PC-3 (cell line): ENCODE measurements at regions of chr18 and their contacts with region 1.

Region 1: DNA sequence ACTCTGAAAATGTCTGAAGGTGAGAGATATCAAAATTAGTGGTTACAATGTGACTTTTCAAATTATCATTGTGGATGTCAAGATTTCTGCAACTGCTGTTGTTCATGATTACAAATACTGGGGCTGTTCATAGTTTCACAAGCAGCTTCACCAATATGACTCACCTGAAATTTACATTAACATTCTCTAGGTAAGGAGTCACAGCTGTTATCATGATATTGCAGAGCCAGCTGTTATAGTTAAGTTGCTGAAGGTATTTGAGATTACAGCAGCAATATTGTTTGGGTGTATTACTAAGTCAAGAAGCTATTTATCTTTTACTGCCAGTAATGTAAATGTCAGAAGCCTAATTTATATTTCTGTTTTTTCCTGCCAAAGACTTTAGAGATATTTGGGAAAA is 140.0 kb downstream of the MC4R start:
- DNase-seq: peak; percentile 89
- ATAC-seq: peak; percentile 97
- H3K4me3 ChIP-seq: no peak overlapping the region
- H3K27ac ChIP-seq: peak overlapping the region; percentile 22; the same call in 1 of the 2 replicates
- H3K4me1 ChIP-seq: peaks cover 24% of the 10 kb centered on the region
- H3K27me3 ChIP-seq: no peaks in the 10 kb centered on the region
- CTCF ChIP-seq: no peak

Region 2: DNA sequence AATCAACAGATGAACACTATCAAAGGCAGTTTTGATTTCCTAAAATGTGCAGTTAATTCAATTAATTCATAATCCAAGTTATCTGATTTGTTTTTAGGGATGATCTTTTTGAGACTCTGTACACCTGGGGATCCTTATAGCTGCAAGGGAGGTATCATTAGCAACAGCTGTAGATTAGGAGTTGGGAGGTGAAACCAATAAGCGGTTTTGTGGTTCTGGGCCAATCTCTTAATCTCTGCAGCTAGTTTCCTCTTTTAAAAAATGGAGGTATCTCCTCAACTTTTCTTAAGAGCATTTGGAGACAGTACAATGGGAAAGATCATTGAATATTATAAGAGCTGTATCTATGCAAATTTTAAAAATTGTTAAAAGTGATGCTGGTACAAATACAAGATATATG is 14.1 kb after region 1 on chr18:
- CTCF ChIA-PET with region 1: no interaction called
- POLR2A ChIA-PET with region 1: no interaction called
- intact Hi-C with region 1: no loop called
- DNase-seq: no peak
- ATAC-seq: no peak
- H3K4me3 ChIP-seq: no peak overlapping the region
- H3K27ac ChIP-seq: no peak overlapping the region
- H3K4me1 ChIP-seq: no peaks in the 10 kb centered on the region
- H3K27me3 ChIP-seq: no peaks in the 10 kb centered on the region
- CTCF ChIP-seq: no peak

Region 3: DNA sequence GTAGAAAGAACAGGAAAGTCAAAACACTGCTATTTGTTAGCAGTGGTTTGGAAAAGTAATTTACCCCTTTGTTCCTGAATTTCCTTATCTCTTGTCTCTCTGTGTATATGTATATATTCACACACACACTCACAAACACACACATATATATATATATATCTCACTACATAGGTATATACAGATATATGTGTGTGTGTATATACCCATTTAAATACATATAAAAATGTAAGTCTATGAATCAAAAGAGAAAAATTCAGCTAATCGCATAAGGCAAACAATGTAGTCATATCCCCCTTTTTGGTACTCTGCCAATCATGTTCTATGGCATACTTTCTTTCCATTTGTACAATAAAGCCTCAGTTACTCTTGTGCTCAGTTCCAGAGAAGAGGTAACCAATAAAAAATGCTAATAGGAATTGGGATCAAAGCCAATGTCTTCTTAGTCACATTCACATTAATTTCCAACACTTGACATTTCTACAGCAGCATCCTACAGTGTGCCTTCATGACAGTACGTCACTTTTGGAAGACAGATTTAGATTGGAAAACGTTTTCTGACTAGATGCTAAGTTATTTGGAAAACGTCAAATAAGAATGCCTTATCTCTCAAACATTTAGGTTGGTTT is 45.4 kb after region 1 on chr18:
- CTCF ChIA-PET with region 1: no interaction called
- POLR2A ChIA-PET with region 1: no interaction called
- intact Hi-C with region 1: loop called (anchors 5 kb)
- DNase-seq: peak; percentile 97
- ATAC-seq: peak; percentile 96
- H3K4me3 ChIP-seq: 0 out of 2 replicates have a peak overlapping the region, but pooled peaks have one; percentile 4
- H3K27ac ChIP-seq: peak overlapping the region; percentile 55
- H3K4me1 ChIP-seq: peaks cover 23% of the 10 kb centered on the region
- H3K27me3 ChIP-seq: no peaks in the 10 kb centered on the region
- CTCF ChIP-seq: no peak